Activated B cell treated with CpG ODN at 0.5 μM for 24 hours (primary cell): ENCODE measurements at regions of chr6 and their contacts with region 1.

Region 1: GRCh38 chr6:291697-292505 is at the start of gene DUSP22:
- DNase-seq: peak; percentile 95
- ATAC-seq: peak; percentile 63
- H3K4me3 Mint-ChIP-seq: peak within 1 kb of the TSS; percentile 97
- H3K27ac Mint-ChIP-seq: peak within 1 kb of the TSS; percentile 93
- H3K4me1 Mint-ChIP-seq: peaks cover 61% of the 10 kb centered on the region
- H3K27me3 Mint-ChIP-seq: no peaks in the 10 kb centered on the region
- CTCF ChIP-seq: no peak
- total RNA-seq, gene DUSP22: 137 and 153 TPM in 2 replicates

Region 2: GRCh38 chr6:217048-217659 is 74.7 kb before region 1 on chr6:
- CTCF ChIA-PET with region 1: interaction called, 7 read pairs
- POLR2A ChIA-PET with region 1: interaction called, 82 read pairs
- intact Hi-C with region 1: loop called (anchors 1 kb)
- DNase-seq: no peak
- ATAC-seq: no peak
- H3K4me3 Mint-ChIP-seq: peak overlapping the region; percentile 61
- H3K27ac Mint-ChIP-seq: peak overlapping the region; percentile 90
- H3K4me1 Mint-ChIP-seq: peaks cover 81% of the 10 kb centered on the region
- H3K27me3 Mint-ChIP-seq: no peaks in the 10 kb centered on the region
- CTCF ChIP-seq: no peak

Region 3: GRCh38 chr6:259901-260508 is 31.9 kb before region 1 on chr6:
- CTCF ChIA-PET with region 1: no interaction called
- POLR2A ChIA-PET with region 1: interaction called, 12 read pairs
- intact Hi-C with region 1: loop called (anchors 5 kb)
- DNase-seq: no peak
- ATAC-seq: peak; percentile 34
- H3K4me3 Mint-ChIP-seq: peak overlapping the region; percentile 11
- H3K27ac Mint-ChIP-seq: peak overlapping the region; percentile 19
- H3K4me1 Mint-ChIP-seq: peaks cover 80% of the 10 kb centered on the region
- H3K27me3 Mint-ChIP-seq: no peaks in the 10 kb centered on the region
- CTCF ChIP-seq: no peak

Region 4: GRCh38 chr6:328136-328670 is 36.3 kb after region 1 on chr6:
- CTCF ChIA-PET with region 1: no interaction called
- POLR2A ChIA-PET with region 1: interaction called, 15 read pairs
- intact Hi-C with region 1: loop called (anchors 1 kb)
- DNase-seq: peak; percentile 20
- ATAC-seq: peak; percentile 90
- H3K4me3 Mint-ChIP-seq: no peak overlapping the region
- H3K27ac Mint-ChIP-seq: no peak overlapping the region
- H3K4me1 Mint-ChIP-seq: peaks cover 8% of the 10 kb centered on the region
- H3K27me3 Mint-ChIP-seq: no peaks in the 10 kb centered on the region
- CTCF ChIP-seq: no peak

Region 5: DNA sequence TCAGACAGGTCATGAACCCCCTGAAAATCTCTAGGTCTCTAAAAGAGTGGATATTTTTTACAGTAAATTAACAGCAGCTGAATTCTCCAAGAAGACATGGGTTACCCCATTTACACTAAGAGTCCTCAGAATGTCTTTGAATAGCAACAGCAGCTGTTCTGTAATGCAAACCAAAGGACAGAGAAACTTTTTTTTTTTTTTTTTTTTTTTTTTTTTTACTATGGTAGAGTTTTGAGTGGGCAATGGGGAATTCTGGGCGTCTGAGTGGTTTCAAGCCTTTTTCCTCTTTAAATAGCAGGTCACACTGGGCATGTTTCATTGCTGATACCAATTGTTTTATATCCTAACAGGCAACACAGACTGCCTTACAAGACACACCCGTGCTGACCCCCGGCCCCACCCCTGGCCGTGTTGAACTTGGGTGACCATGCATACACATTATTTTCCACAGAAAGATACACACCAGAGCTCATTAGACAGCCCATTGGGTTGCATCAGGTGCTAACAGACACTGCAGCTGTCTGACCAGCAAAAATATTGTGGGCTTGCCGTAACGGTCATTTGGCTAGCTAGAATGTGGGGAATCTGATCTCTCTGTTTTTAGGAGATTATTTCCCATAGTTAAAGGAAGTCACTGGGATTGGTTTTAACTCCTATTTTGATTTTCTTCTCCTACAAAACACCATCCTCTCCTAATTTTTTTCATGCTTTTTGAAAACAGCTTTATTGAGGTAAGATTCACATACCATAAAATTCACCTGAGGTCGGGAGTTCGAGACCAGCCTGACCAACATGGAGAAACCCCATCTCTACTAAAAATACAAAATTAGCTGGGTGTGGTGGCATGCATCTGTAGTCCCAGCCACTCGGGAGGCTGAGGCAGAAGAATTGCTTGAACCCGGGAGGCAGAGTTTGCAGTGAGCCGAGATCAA is 73.0 kb after region 1 on chr6:
- CTCF ChIA-PET with region 1: no interaction called
- POLR2A ChIA-PET with region 1: interaction called, 13 read pairs
- intact Hi-C with region 1: no loop called
- DNase-seq: no peak
- ATAC-seq: peak; percentile 76
- H3K4me3 Mint-ChIP-seq: peak overlapping the region; percentile 42
- H3K27ac Mint-ChIP-seq: peak overlapping the region; percentile 32
- H3K4me1 Mint-ChIP-seq: peaks cover 56% of the 10 kb centered on the region
- H3K27me3 Mint-ChIP-seq: peaks cover 2% of the 10 kb centered on the region
- CTCF ChIP-seq: no peak

Region 6: GRCh38 chr6:431986-432385 is 140.1 kb after region 1 on chr6:
- CTCF ChIA-PET with region 1: no interaction called
- POLR2A ChIA-PET with region 1: interaction called, 12 read pairs
- intact Hi-C with region 1: no loop called
- DNase-seq: no peak
- ATAC-seq: no peak
- H3K4me3 Mint-ChIP-seq: no peak overlapping the region
- H3K27ac Mint-ChIP-seq: peak overlapping the region; percentile 35
- H3K4me1 Mint-ChIP-seq: peaks cover 35% of the 10 kb centered on the region
- H3K27me3 Mint-ChIP-seq: no peaks in the 10 kb centered on the region
- CTCF ChIP-seq: no peak

Region 7: DNA sequence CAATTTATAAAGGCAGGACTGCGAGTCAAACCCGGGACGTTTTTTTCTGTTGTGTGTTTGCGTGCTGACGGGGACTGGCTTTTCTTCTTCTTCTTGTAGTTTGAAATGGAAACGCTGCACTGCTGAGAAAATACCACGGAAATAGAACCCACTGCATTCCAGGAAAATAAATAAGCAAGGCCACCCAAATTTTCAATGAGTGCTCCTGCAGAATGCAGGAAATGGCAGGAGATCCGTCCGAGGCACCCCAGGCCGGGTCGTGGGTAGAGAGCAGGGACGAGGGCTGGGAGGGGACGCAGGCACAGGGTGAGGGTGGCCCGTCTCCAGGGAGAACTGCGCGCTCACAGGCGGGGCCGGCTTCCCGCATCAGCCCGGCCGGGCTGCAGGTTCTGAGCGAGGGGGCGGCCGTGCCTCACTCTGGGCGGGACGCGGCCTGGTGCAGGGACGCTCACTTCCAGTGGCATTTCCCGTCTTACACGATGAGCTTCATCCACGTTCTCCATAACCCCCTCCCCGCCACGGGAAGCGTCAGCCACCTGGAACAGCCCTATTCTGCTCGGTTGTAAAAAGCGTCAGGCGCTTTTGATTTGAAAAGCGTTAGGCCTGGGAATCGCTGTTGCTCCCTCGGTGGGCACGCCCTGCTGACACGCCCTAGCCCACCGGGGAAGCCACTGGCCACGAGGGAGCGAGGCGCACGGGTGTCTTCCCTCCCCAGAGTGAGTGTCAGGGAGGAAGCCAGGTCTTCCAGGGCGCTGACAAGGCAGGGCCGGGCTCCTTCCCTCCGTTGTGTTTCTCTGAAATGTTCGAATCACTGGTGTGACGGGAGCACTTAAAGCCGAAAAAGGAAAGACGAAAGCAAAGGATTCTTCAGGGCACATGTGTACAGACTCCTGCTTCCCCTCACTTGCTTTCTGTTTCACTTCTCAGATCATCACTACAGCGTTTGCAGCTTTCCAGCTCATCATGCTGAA is 419.0 kb after region 1 on chr6:
- CTCF ChIA-PET with region 1: no interaction called
- POLR2A ChIA-PET with region 1: no interaction called
- intact Hi-C with region 1: loop called (anchors 2 kb)
- DNase-seq: peak; percentile 55
- ATAC-seq: peak; percentile 85
- H3K4me3 Mint-ChIP-seq: peak overlapping the region; percentile 96
- H3K27ac Mint-ChIP-seq: peak overlapping the region; percentile 97
- H3K4me1 Mint-ChIP-seq: peaks cover 17% of the 10 kb centered on the region
- H3K27me3 Mint-ChIP-seq: peaks cover 4% of the 10 kb centered on the region
- CTCF ChIP-seq: no peak